Activated B cell treated with CpG ODN at 0.5 μM for 24 hours (primary cell): ENCODE measurements at regions of chr21 and their contacts with region 1.

Region 1: GRCh38 chr21:35400233-35400957 is 351.3 kb upstream of the RUNX1 start:
- DNase-seq: peak; percentile 18
- ATAC-seq: peak; percentile 93
- H3K4me3 Mint-ChIP-seq: peak overlapping the region; percentile 0
- H3K27ac Mint-ChIP-seq: no peak overlapping the region
- H3K4me1 Mint-ChIP-seq: peaks cover 13% of the 10 kb centered on the region
- H3K27me3 Mint-ChIP-seq: peaks cover 8% of the 10 kb centered on the region
- CTCF ChIP-seq: no peak

Region 2: GRCh38 chr21:34745557-34746255 is 654.7 kb before region 1 on chr21:
- CTCF ChIA-PET with region 1: interaction called, 59 read pairs
- POLR2A ChIA-PET with region 1: interaction called, 5 read pairs
- intact Hi-C with region 1: loop called (anchors 1 kb)
- DNase-seq: peak; percentile 33
- ATAC-seq: peak; percentile 95
- H3K4me3 Mint-ChIP-seq: peak overlapping the region; percentile 72
- H3K27ac Mint-ChIP-seq: no peak overlapping the region
- H3K4me1 Mint-ChIP-seq: peaks cover 5% of the 10 kb centered on the region
- H3K27me3 Mint-ChIP-seq: peaks cover 16% of the 10 kb centered on the region
- CTCF ChIP-seq: peak; percentile 36

Region 3: DNA sequence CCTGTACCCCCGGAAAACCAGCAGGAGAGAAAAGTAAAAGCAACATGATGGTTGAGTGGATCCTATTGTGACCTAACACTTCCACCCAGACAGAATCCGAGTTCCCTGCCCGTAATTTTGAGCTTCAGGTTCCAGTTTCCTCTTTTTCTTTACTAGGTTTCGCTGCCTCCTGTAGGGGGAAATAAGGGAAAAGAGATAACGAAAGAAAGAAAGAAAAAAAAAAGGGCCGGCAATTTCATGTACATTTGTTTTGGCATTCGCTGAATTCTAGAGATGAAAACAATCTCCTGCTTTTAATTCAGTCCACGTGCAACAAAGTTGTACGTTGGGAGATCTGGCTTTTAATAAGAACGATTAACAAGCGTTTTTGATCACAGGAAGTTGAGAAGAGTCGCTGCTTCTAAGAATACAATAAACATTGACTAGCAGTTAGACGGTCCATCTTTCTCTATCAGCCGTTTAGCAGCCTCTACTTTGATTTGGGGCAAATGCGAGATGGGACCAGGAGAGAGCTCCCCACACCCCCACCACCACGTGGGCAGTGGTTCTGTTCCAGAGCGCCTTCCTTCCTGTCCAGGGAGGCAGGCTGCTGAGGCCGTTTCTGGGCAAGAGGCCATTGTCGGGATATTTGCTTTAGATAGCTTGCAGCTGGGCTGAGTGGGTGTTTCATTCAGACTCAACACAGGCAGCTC is 195.4 kb before region 1 on chr21:
- CTCF ChIA-PET with region 1: interaction called, 12 read pairs
- POLR2A ChIA-PET with region 1: no interaction called
- intact Hi-C with region 1: no loop called
- DNase-seq: no peak
- ATAC-seq: peak; percentile 51
- H3K4me3 Mint-ChIP-seq: peak overlapping the region; percentile 82
- H3K27ac Mint-ChIP-seq: peak overlapping the region; percentile 81
- H3K4me1 Mint-ChIP-seq: peaks cover 33% of the 10 kb centered on the region
- H3K27me3 Mint-ChIP-seq: no peaks in the 10 kb centered on the region
- CTCF ChIP-seq: no peak

Region 4: DNA sequence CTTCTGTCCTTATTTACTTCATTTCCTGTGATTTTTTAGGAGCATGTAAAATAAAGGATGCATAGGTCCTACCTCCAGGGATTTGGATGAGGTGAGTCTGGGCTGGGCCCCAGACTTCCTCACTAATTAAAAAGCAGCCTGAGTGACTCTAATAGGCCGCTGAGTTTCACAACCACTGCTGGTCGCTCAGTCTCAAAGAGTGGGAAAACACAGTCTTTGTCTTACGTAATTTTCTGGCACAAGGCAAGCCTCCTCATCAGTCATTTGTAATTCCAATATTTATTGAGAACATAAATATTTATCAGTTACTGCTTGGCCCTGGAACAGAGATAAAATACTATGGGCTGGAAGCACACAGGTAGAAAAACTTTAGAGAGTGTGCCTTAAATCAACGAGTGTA is 155.9 kb before region 1 on chr21:
- CTCF ChIA-PET with region 1: no interaction called
- POLR2A ChIA-PET with region 1: no interaction called
- intact Hi-C with region 1: no loop called
- DNase-seq: no peak
- ATAC-seq: no peak
- H3K4me3 Mint-ChIP-seq: no peak overlapping the region
- H3K27ac Mint-ChIP-seq: no peak overlapping the region
- H3K4me1 Mint-ChIP-seq: no peaks in the 10 kb centered on the region
- H3K27me3 Mint-ChIP-seq: peaks cover 13% of the 10 kb centered on the region
- CTCF ChIP-seq: no peak

Region 5: DNA sequence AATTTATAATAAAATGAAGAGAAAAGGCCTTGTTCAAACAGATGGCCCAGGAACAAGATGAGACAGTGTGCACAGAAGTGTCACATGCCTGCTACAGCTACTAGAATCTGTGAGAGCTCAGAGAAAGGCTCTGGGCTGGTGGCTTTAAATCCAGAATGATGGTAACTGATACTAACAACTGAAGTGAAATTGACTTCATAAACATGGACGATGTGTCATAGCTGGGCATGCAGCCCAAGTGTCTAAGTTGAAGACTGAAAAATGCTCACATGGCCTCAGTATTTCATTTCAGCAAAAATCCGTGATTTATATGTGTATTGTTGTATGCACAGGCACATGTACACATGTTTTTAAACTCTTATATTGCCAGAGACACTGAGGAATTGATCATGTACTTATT is 143.0 kb before region 1 on chr21:
- CTCF ChIA-PET with region 1: no interaction called
- POLR2A ChIA-PET with region 1: no interaction called
- intact Hi-C with region 1: no loop called
- DNase-seq: no peak
- ATAC-seq: no peak
- H3K4me3 Mint-ChIP-seq: no peak overlapping the region
- H3K27ac Mint-ChIP-seq: no peak overlapping the region
- H3K4me1 Mint-ChIP-seq: no peaks in the 10 kb centered on the region
- H3K27me3 Mint-ChIP-seq: peaks cover 9% of the 10 kb centered on the region
- CTCF ChIP-seq: no peak

Region 6: DNA sequence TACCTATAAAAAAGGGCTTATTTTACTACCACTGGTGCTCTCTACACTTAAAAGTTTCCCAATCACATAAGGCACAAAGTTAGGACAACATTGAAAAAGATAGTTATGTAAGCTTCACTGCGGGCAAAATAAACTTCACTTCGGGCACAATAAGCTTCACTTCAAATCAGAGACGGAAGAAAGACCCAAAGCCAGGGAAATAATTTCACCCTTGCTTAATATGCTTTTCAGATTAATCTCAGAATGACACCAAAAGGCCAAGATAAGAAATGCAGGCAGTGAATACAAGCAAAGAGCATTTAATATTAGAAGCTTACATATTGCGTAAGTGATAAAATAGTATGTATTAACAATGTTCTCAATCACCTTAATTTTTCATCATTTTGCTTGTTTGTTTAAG is 215.7 kb after region 1 on chr21:
- CTCF ChIA-PET with region 1: no interaction called
- POLR2A ChIA-PET with region 1: no interaction called
- intact Hi-C with region 1: loop called (anchors 1 kb)
- DNase-seq: no peak
- ATAC-seq: no peak
- H3K4me3 Mint-ChIP-seq: no peak overlapping the region
- H3K27ac Mint-ChIP-seq: no peak overlapping the region
- H3K4me1 Mint-ChIP-seq: peaks cover 3% of the 10 kb centered on the region
- H3K27me3 Mint-ChIP-seq: no peaks in the 10 kb centered on the region
- CTCF ChIP-seq: no peak

Region 7: DNA sequence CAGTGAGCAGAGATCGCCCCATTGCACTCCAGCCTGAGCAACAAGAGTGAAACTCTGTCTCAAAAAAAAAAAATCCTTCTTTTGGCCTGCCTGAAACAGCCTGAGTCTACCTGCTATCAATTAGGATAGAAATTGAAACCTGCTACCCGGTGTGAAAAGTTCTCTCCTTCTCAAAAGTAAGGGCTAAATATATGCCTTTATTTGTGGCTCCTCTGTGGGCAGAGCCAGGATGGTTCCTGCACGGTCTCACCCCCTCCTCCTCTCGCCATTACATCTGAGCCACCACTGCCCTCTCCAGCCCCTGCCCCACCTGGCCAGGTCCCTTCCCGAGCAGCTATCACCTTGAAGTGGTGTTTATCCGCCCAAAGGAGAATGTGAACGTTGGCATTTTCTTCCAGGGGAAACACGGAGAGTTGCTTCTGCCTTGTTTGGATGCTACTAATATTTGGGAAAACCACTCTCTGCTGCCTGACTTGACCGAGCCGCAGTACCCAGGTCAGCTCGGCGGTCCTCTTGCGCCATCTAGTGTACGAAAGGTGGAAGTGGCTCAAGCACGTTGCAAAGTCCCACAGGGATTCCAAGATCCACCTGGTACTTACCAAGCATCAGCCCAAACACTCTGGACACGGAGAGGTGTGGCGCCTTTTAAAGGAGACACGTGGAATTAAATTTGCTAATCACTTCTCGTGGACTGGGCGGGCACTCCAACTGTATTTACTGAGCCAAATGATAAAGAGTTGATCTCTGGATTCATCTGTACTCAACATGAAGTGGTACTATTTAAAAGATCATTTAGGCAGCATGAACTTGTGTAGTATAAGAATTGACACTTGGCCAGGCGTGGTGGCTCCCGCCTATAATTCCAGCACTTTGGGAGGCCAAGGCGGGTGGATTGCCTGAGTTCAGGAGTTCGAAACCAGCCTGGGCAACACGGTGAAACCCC is 628.0 kb after region 1 on chr21:
- CTCF ChIA-PET with region 1: interaction called, 6 read pairs
- POLR2A ChIA-PET with region 1: no interaction called
- intact Hi-C with region 1: loop called (anchors 1 kb)
- DNase-seq: peak; percentile 49
- ATAC-seq: peak; percentile 90
- H3K4me3 Mint-ChIP-seq: no peak overlapping the region
- H3K27ac Mint-ChIP-seq: no peak overlapping the region
- H3K4me1 Mint-ChIP-seq: peaks cover 5% of the 10 kb centered on the region
- H3K27me3 Mint-ChIP-seq: no peaks in the 10 kb centered on the region
- CTCF ChIP-seq: peak; percentile 85